PC-3 (cell line): ENCODE measurements at regions of chr13 and their contacts with region 1.

Region 1: GRCh38 chr13:81058916-81059290 is 718.0 kb upstream of the SPRY2 start:
- DNase-seq: peak; percentile 49
- ATAC-seq: peak; percentile 87
- H3K4me3 ChIP-seq: no peak overlapping the region
- H3K27ac ChIP-seq: 0 out of 2 replicates have a peak overlapping the region, but pooled peaks have one; percentile 6
- H3K4me1 ChIP-seq: peaks cover 18% of the 10 kb centered on the region
- H3K27me3 ChIP-seq: no peaks in the 10 kb centered on the region
- CTCF ChIP-seq: no peak

Region 2: GRCh38 chr13:80716610-80717081 is 342.3 kb before region 1 on chr13:
- CTCF ChIA-PET with region 1: no interaction called
- POLR2A ChIA-PET with region 1: no interaction called
- intact Hi-C with region 1: no loop called
- DNase-seq: no peak
- ATAC-seq: no peak
- H3K4me3 ChIP-seq: no peak overlapping the region
- H3K27ac ChIP-seq: no peak overlapping the region
- H3K4me1 ChIP-seq: no peaks in the 10 kb centered on the region
- H3K27me3 ChIP-seq: no peaks in the 10 kb centered on the region
- CTCF ChIP-seq: no peak

Region 3: GRCh38 chr13:81041761-81042160 is 17.1 kb before region 1 on chr13:
- CTCF ChIA-PET with region 1: no interaction called
- POLR2A ChIA-PET with region 1: no interaction called
- intact Hi-C with region 1: no loop called
- DNase-seq: no peak
- ATAC-seq: no peak
- H3K4me3 ChIP-seq: no peak overlapping the region
- H3K27ac ChIP-seq: no peak overlapping the region
- H3K4me1 ChIP-seq: no peaks in the 10 kb centered on the region
- H3K27me3 ChIP-seq: no peaks in the 10 kb centered on the region
- CTCF ChIP-seq: no peak

Region 4: GRCh38 chr13:81171065-81171647 is 112.3 kb after region 1 on chr13:
- CTCF ChIA-PET with region 1: no interaction called
- POLR2A ChIA-PET with region 1: no interaction called
- intact Hi-C with region 1: loop called (anchors 1 kb)
- DNase-seq: peak; percentile 54
- ATAC-seq: peak; percentile 42; the same call in 1 of the 2 replicates
- H3K4me3 ChIP-seq: no peak overlapping the region
- H3K27ac ChIP-seq: no peak overlapping the region
- H3K4me1 ChIP-seq: no peaks in the 10 kb centered on the region
- H3K27me3 ChIP-seq: no peaks in the 10 kb centered on the region
- CTCF ChIP-seq: peak; percentile 67

Region 5: GRCh38 chr13:81302125-81302524 is 243.2 kb after region 1 on chr13:
- CTCF ChIA-PET with region 1: no interaction called
- POLR2A ChIA-PET with region 1: no interaction called
- intact Hi-C with region 1: no loop called
- DNase-seq: no peak
- ATAC-seq: peak; percentile 32
- H3K4me3 ChIP-seq: no peak overlapping the region
- H3K27ac ChIP-seq: no peak overlapping the region
- H3K4me1 ChIP-seq: peaks cover 11% of the 10 kb centered on the region
- H3K27me3 ChIP-seq: no peaks in the 10 kb centered on the region
- CTCF ChIP-seq: no peak

Region 6: DNA sequence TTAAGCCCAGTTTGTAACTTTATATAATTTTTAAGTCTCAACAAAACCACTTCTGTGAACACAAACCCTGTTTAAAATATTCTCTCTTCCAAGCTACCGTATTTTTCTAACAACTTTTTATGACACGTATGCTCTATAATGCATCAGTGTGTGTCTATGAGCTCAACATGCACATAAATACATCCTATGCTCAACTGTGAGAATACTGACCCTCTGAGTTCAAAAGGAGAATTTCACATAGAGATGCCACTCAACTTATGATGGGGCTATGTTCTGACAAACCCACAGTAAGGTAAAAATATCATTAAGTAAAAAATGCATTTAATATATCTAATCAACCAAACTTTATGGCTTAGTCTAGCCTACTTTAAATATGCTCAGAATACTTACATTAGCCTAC is 421.7 kb after region 1 on chr13:
- CTCF ChIA-PET with region 1: no interaction called
- POLR2A ChIA-PET with region 1: no interaction called
- intact Hi-C with region 1: loop called (anchors 2 kb)
- DNase-seq: peak; percentile 7
- ATAC-seq: peak; percentile 67
- H3K4me3 ChIP-seq: no peak overlapping the region
- H3K27ac ChIP-seq: no peak overlapping the region
- H3K4me1 ChIP-seq: no peaks in the 10 kb centered on the region
- H3K27me3 ChIP-seq: no peaks in the 10 kb centered on the region
- CTCF ChIP-seq: peak; percentile 30; the same call in 1 of the 2 replicates